ENCODE measurements at regions of chr1 and their contacts with region 1.

Region 1: GRCh38 chr1:20981915-20982314 is 194.8 kb downstream of the EIF4G3 start:
- DNase-seq: peak in 1 of 2 donors; percentile 3
- ATAC-seq: peak in 2 of 3 donors; percentile 32 to 44
- H3K4me3 ChIP-seq: no peak overlapping the region
- H3K4me3 Mint-ChIP-seq: no peak overlapping the region
- H3K27ac ChIP-seq: no peak overlapping the region
- H3K27ac Mint-ChIP-seq: peak overlapping the region; percentile 66 to 73
- H3K4me1 ChIP-seq: no peaks in the 10 kb centered on the region
- H3K4me1 Mint-ChIP-seq: peaks cover 12 to 15% of the 10 kb centered on the region in 2 donors
- H3K27me3 ChIP-seq: no peaks in the 10 kb centered on the region
- H3K27me3 Mint-ChIP-seq: no peaks in the 10 kb centered on the region
- CTCF ChIP-seq: no peak

Region 2: GRCh38 chr1:20454004-20454403 is 527.9 kb before region 1 on chr1:
- intact Hi-C with region 1: no loop called
- DNase-seq: no peak
- ATAC-seq: no peak
- H3K4me3 ChIP-seq: no peak overlapping the region
- H3K4me3 Mint-ChIP-seq: no peak overlapping the region
- H3K27ac ChIP-seq: no peak overlapping the region
- H3K27ac Mint-ChIP-seq: no peak overlapping the region
- H3K4me1 ChIP-seq: no peaks in the 10 kb centered on the region
- H3K4me1 Mint-ChIP-seq: no peaks in the 10 kb centered on the region
- H3K27me3 ChIP-seq: no peaks in the 10 kb centered on the region
- H3K27me3 Mint-ChIP-seq: peaks cover 10 to 15% of the 10 kb centered on the region in 2 donors
- CTCF ChIP-seq: no peak

Region 3: GRCh38 chr1:21200767-21201166 is 218.9 kb after region 1 on chr1:
- intact Hi-C with region 1: loop called (anchors 1 kb)
- DNase-seq: no peak
- ATAC-seq: no peak
- H3K4me3 ChIP-seq: no peak overlapping the region
- H3K4me3 Mint-ChIP-seq: no peak overlapping the region
- H3K27ac ChIP-seq: no peak overlapping the region
- H3K27ac Mint-ChIP-seq: no peak overlapping the region
- H3K4me1 ChIP-seq: no peaks in the 10 kb centered on the region
- H3K4me1 Mint-ChIP-seq: no peaks in the 10 kb centered on the region
- H3K27me3 ChIP-seq: no peaks in the 10 kb centered on the region
- H3K27me3 Mint-ChIP-seq: peaks cover 5 to 11% of the 10 kb centered on the region in 2 donors
- CTCF ChIP-seq: no peak

Measured in natural killer cell (primary cell).